Activated CD4-positive, alpha-beta T cell treated with anti-CD3 and anti-CD28 coated beads for 36 hours (primary cell): ENCODE measurements at regions of chr16 and their contacts with region 1.

Region 1: DNA sequence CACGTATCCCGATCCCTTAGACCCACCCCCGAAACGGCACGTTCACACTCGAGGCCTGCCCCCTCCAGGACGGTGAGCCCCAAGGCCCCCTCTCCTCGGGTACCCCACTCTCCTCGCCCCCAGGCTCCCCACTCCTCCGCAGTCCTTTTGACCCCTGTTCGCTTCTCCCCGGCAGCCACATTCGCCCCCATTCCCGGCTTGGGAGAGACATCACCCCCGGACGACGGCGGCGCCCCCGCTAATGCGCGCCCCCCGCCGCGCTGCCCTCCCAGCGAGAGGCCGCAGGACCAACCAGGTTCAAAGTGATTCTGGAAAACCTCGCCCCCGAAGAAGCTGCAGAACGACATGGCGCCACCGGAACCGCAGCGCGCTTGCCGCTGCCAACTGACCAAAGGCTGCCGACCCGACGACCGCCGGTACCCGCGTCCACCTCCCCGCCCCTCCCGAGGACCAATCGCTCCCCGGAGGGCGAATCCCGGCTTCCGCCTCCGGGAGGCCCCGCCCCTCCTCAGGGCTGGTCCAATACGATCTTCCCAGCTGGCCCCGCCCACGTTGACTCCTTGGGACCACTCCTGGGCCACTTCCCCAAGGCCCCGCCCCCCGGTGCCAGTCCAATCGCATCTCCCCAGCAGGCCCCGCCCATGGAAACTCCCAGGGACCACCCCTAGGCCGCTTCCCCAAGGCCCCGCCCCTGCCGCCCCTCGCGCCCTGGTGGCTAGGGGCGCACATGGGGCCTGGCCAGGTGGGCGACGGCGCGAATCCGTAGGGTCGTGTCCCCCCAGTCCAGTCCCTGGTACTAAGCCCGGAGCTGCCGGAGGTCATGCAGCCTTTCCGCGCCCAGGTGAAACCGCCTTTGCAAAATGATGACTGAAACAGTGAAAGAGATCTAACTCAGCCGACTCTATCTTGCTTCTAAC is at the start of gene MSRB1:
- DNase-seq: peak; percentile 100
- ATAC-seq: peak; percentile 97
- H3K4me3 Mint-ChIP-seq: peak within 1 kb of the TSS; percentile 80
- H3K27ac Mint-ChIP-seq: peak within 1 kb of the TSS; percentile 82
- H3K4me1 Mint-ChIP-seq: peaks cover 26% of the 10 kb centered on the region
- H3K27me3 Mint-ChIP-seq: no peaks in the 10 kb centered on the region
- total RNA-seq, gene MSRB1: 17.3 to 21.8 TPM

Region 2: GRCh38 chr16:1420111-1420540 is 522.9 kb before region 1 on chr16:
- CTCF ChIA-PET with region 1: no interaction called
- POLR2A ChIA-PET with region 1: no interaction called
- intact Hi-C with region 1: loop called in 1 of 2 experiments (anchors 5 kb)
- DNase-seq: peak; percentile 32
- ATAC-seq: no peak
- H3K4me3 Mint-ChIP-seq: peak overlapping the region; percentile 84
- H3K27ac Mint-ChIP-seq: peak overlapping the region; percentile 70
- H3K4me1 Mint-ChIP-seq: peaks cover 25% of the 10 kb centered on the region
- H3K27me3 Mint-ChIP-seq: no peaks in the 10 kb centered on the region

Region 3: DNA sequence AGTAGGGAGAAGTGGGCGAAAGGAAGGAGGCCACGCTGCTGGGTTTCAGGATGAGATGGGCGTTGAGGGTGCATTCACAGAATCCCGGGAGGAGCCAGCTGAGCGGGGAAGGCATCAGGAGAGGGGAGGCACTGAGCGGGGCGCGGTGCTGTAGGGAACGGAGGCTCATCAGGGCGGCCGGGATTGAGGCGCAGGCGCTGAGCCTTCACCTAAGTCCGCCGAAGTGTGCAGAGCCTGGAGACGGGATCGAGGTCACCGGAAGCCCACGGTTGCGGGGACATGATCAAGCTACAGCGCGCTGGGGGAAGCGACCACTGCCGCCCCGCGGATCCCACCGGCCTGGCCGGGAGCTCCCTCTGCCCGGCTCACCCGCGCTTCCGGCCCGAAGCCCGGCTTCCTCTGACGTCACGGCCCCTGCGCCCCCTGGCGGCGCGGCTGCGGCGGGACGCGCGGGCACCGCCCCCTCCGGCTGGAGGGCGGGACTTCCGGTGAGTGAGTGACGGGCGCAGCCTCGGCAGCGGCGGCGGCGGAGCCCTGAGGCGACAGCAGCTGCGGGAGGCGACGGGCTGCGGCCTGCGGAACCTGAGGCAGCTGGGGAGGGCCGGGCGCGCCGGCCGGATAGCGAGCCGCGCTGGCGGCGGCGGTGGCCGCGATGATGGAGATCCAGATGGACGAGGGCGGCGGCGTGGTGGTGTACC is 237.2 kb before region 1 on chr16 and contains the start of gene MAPK8IP3:
- CTCF ChIA-PET with region 1: interaction called, 3 read pairs
- POLR2A ChIA-PET with region 1: no interaction called
- intact Hi-C with region 1: loop called in 1 of 2 experiments (anchors 1 kb)
- DNase-seq: peak; percentile 96
- ATAC-seq: peak; percentile 80
- H3K4me3 Mint-ChIP-seq: peak within 1 kb of the TSS; percentile 92
- H3K27ac Mint-ChIP-seq: peak within 1 kb of the TSS; percentile 90
- H3K4me1 Mint-ChIP-seq: peaks cover 32% of the 10 kb centered on the region
- H3K27me3 Mint-ChIP-seq: no peaks in the 10 kb centered on the region
- total RNA-seq, gene MAPK8IP3: 56.7 to 57.6 TPM

Region 4: DNA sequence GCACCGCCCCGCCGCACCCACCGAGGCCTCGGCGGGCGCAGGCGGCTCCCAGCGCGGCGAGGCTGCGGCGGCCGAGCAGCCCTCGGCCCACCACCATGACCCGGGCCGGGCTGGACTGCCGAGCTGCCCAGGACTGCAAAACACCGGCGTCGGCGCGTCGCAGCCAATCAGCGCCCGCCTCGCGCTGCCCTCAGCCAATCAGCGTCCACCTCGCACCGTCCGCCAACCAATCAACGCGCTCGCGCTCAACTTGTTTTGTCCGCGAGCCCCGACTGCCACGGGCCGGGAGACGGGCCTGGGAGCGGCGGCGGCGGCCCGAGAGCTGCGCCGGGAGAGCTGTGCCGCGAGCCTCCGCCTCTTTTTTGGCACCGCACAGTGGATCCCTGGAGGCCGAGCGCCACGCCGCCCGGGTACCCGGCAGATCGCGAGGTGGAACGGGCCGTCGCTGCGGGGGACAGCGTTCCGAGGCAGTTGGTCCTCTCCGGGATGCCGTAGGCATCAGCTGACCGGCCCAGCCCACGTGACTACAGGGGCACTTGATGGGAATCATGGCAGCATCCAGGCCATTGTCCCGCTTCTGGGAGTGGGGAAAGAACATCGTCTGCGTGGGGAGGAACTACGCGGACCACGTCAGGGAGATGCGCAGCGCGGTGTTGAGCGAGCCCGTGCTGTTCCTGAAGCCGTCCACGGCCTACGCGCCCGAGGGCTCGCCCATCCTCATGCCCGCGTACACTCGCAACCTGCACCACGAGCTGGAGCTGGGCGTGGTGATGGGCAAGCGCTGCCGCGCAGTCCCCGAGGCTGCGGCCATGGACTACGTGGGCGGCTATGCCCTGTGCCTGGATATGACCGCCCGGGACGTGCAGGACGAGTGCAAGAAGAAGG is 116.1 kb before region 1 on chr16 and contains the starts of genes FAHD1 and HAGH:
- CTCF ChIA-PET with region 1: no interaction called
- POLR2A ChIA-PET with region 1: interaction called, 6 read pairs
- intact Hi-C with region 1: loop called in 1 of 2 experiments (anchors 1 kb)
- DNase-seq: peak; percentile 93
- ATAC-seq: peak; percentile 90
- H3K4me3 Mint-ChIP-seq: peak within 1 kb of the TSS; percentile 91
- H3K27ac Mint-ChIP-seq: peak within 1 kb of the TSS; percentile 89
- H3K4me1 Mint-ChIP-seq: peaks cover 27% of the 10 kb centered on the region
- H3K27me3 Mint-ChIP-seq: no peaks in the 10 kb centered on the region
- total RNA-seq, gene FAHD1: 11.6 to 11.9 TPM
- total RNA-seq, gene HAGH: 20.9 to 25.0 TPM

Region 5: DNA sequence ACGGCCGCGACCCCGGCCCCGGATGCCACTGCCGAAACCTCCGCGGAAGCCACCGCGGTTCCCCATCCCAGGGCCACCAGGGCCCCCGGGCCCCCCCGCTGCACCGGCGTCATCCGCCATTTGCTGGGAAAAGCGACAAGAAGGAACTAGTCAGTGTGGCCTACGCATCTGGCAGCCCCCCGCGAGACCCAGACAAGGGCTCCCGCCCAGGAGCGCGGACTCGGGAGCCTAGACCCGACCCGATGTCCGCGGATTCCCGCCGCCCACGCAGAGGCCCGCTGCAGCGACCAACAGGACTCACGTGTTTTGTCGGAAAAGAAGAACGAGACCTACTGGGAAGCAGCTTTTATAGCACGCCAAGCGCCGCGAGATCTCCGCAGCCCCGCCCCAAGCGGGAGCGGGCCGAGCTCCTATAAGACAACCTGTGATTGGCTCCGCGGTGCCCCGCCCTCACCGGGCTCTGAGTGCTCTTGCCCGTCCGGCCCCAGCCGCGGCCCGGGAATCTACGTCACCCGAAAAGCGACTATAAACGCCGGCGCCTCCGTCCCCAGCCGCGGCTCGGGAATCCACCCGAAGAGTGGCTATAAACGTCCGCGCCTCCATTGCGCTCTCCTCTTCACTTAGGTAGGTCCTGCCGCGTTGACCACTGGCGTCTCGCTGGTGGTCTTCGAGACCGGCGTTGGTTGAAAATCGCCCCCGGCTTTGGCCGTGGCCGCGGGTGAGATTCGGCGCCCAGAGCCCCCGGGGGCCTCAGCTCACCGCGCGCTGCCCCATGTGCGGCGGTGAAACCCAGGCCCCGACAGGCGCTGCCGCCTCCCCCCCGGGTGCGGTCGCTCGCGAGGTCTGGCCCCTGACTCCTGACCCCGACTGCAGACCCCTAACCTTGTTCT is 21.7 kb after region 1 on chr16 and contains the start of gene RPS2:
- CTCF ChIA-PET with region 1: interaction called, 3 read pairs
- POLR2A ChIA-PET with region 1: interaction called, 14 read pairs
- intact Hi-C with region 1: loop called (anchors 1 kb)
- DNase-seq: peak; percentile 100
- ATAC-seq: peak; percentile 81
- H3K4me3 Mint-ChIP-seq: peak within 1 kb of the TSS; percentile 96
- H3K27ac Mint-ChIP-seq: peak within 1 kb of the TSS; percentile 99
- H3K4me1 Mint-ChIP-seq: peaks cover 38% of the 10 kb centered on the region
- H3K27me3 Mint-ChIP-seq: no peaks in the 10 kb centered on the region
- total RNA-seq, gene RPS2: 5,351 to 6,287 TPM

Region 6: DNA sequence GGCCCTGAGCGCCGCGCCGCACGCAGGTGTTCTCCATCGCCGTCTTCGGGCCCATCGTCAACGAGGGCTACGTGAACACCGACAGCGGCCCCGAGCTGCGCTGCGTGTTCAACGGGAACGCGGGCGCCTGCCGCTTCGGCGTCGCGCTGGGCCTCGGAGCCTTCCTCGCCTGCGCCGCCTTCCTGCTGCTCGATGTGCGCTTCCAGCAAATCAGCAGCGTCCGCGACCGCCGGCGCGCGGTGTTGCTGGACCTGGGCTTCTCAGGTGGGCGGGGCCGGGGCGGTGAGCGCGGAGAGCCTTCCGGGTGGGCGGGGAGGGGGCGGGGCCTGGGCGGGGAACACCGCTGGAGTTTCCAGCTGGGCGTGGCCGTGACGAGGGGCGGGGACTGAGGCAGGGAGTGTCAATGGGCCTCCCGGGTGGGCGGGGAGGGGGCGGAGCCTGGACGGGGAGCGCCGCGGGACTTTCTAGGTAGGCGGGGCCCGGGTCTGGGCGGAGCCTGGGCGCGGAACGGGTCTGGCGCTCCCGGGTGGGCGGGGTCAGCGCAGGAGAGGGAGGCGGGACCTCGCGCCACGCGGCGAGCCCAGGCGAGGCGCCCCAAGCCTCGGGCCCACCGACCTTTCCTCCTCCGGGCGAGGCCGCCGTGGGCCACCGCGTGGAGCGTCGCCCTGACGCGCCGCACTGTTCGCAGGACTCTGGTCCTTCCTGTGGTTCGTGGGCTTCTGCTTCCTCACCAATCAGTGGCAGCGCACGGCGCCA is 49.1 kb after region 1 on chr16:
- CTCF ChIA-PET with region 1: no interaction called
- POLR2A ChIA-PET with region 1: no interaction called
- intact Hi-C with region 1: loop called in 1 of 2 experiments (anchors 1 kb)
- DNase-seq: peak; percentile 100
- ATAC-seq: peak; percentile 70
- H3K4me3 Mint-ChIP-seq: peak overlapping the region; percentile 56
- H3K27ac Mint-ChIP-seq: no peak overlapping the region
- H3K4me1 Mint-ChIP-seq: peaks cover 27% of the 10 kb centered on the region
- H3K27me3 Mint-ChIP-seq: peaks cover 15% of the 10 kb centered on the region

Region 7: GRCh38 chr16:2223375-2224182 is 280.5 kb after region 1 on chr16 and contains the start of gene E4F1:
- CTCF ChIA-PET with region 1: no interaction called
- POLR2A ChIA-PET with region 1: no interaction called
- intact Hi-C with region 1: loop called in 1 of 2 experiments (anchors 1 kb)
- DNase-seq: peak; percentile 100
- ATAC-seq: peak; percentile 99
- H3K4me3 Mint-ChIP-seq: peak within 1 kb of the TSS; percentile 78
- H3K27ac Mint-ChIP-seq: peak within 1 kb of the TSS; percentile 13
- H3K4me1 Mint-ChIP-seq: peaks cover 15% of the 10 kb centered on the region
- H3K27me3 Mint-ChIP-seq: no peaks in the 10 kb centered on the region
- total RNA-seq, gene E4F1: 18.0 to 18.6 TPM